Spleen (tissue), 13 donors: ENCODE measurements at regions of chr16 and their contacts with region 1.

Region 1: GRCh38 chr16:86519649-86520316 is 9.5 kb downstream of the FOXF1 start:
- DNase-seq: peak; percentile 85
- H3K4me3 ChIP-seq: peak overlapping the region in 2 of 8 donors; percentile 15 to 53
- H3K27ac ChIP-seq: no peak overlapping the region
- H3K4me1 ChIP-seq: peaks cover 10 to 31% (median 19%) of the 10 kb centered on the region in 6 donors
- H3K27me3 ChIP-seq: peaks cover 0 to 92% (median 63%) of the 10 kb centered on the region in 7 donors
- CTCF ChIP-seq: peak; percentile 39 to 91 (median 80)
- POLR2A ChIP-seq: no peak

Region 2: DNA sequence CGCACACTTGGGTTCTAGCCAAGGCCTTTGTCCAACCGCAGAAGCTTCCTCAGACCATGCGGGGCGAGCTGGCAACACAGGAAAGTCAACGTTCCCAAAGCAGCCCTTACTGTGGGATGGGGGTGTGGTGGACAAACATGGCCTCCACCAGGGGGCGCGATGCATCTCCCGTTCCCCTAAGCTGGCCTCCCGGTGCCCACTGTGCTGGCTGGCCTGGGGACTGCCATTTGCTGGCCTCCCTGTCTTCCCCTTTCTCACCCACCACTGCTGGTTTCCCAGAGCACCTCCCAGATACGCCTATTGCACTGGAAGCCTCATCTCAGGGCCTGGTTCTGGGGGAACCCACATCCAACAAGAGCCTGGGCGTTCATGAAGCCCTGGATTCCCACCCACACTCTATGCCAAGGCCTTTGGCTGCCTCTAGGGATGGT is 475.5 kb before region 1 on chr16:
- intact Hi-C with region 1: loop called (anchors 10 kb)
- DNase-seq: peak; percentile 81
- H3K4me3 ChIP-seq: no peak overlapping the region
- H3K27ac ChIP-seq: no peak overlapping the region
- H3K4me1 ChIP-seq: peaks cover 0 to 10% (median 0%) of the 10 kb centered on the region in 6 donors
- H3K27me3 ChIP-seq: peaks cover 0 to 72% (median 0%) of the 10 kb centered on the region in 7 donors
- CTCF ChIP-seq: peak in 9 of 11 experiments; percentile 40 to 73 (median 61)
- POLR2A ChIP-seq: no peak

Region 3: DNA sequence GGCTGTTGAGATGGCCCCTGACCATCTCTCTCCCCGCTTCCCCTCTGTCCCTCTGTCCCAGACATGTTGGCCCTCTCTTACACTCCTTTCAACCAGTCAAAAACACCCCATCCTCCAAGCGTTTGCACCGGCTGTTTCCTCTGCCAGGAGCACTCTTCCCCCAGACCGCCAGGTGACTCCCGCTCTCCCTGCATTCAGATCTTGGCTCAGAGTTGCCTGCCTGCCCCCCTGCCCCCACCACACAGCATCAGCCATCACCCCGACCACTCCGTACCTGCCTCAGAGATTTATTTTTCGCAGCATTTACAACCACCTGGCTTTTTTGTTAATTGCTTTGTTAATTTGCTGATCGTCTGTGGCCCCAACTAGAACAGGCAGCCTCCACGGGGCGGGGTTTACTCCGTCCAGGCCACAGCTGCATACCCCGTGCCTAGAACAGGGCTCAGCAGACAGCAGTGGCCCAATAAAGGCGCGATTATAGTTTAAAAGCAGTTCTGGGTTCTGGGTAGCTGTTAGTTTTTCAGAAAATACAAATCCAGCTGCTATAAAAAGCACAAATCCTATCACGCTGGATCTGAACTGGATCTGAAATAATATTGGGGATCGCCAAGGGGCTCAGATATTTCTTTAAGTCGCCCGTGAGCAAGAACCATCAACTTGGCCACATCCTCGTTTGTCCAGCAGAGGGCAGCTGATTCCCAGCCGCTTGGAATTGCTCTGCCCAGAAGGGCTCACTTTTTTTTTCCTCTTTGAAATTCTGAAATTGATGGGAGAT is 447.3 kb before region 1 on chr16:
- intact Hi-C with region 1: loop called (anchors 5 kb)
- DNase-seq: peak; percentile 71
- H3K4me3 ChIP-seq: no peak overlapping the region
- H3K27ac ChIP-seq: no peak overlapping the region
- H3K4me1 ChIP-seq: peaks cover 0 to 44% (median 15%) of the 10 kb centered on the region in 6 donors
- H3K27me3 ChIP-seq: peaks cover 0 to 57% (median 0%) of the 10 kb centered on the region in 7 donors
- CTCF ChIP-seq: peak in 10 of 11 experiments; percentile 10 to 82 (median 70)
- POLR2A ChIP-seq: no peak

Region 4: GRCh38 chr16:86343027-86343787 is 176.6 kb before region 1 on chr16:
- intact Hi-C with region 1: loop called (anchors 5 kb)
- DNase-seq: no peak
- H3K4me3 ChIP-seq: no peak overlapping the region
- H3K27ac ChIP-seq: peak overlapping the region in 2 of 8 donors; percentile 23 to 45
- H3K4me1 ChIP-seq: peaks cover 0 to 15% (median 0%) of the 10 kb centered on the region in 6 donors
- H3K27me3 ChIP-seq: peaks cover 0 to 82% (median 0%) of the 10 kb centered on the region in 7 donors
- CTCF ChIP-seq: no peak
- POLR2A ChIP-seq: no peak